SK-N-SH (cell line): ENCODE measurements at regions of chr20 and their contacts with region 1.

Region 1: GRCh38 chr20:46132705-46133120 is 14.6 kb downstream of the CD40 start:
- DNase-seq: peak; percentile 88
- H3K4me3 ChIP-seq: peak overlapping the region in 1 of 2 experiments; percentile 33; a peak in 1 of 4 replicates
- H3K27ac ChIP-seq: no peak overlapping the region
- H3K4me1 ChIP-seq: peaks cover 0 to 35% of the 10 kb centered on the region in 2 experiments; a peak in 1 of 4 replicates
- H3K27me3 ChIP-seq: peaks cover 30% of the 10 kb centered on the region; the same call in 1 of the 2 replicates
- CTCF ChIP-seq: peak; percentile 90
- EP300 ChIP-seq: no peak
- RAD21 ChIP-seq: peak; percentile 94

Region 2: DNA sequence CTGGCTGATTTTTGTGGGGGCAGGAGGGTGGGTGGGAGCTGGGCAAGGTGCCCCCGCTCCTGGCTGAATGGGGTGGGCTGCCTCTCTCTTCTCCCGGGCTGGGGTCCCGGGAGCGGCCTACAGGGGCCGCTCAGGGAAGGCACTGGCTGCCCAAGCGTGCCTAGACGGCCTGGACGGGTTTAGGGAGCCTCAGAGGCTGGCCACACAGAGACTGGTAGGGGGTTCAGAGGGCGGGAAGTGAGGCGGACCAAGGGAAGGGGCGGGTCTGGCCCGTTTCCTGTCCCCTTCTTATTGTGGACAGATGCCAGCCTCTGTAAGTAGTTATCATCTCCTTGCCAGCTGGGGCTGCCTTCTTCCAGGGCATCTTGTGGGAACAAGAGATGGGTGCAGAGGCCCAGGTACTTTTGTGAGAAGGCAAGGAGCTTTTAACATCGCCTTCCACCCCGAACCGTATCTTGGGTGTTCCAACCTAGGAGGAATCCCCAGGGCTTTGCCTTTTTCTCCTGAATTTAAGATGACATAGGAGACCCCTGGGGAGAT is 14.2 kb before region 1 on chr20:
- CTCF ChIA-PET with region 1: interaction called, 24 read pairs
- POLR2A ChIA-PET with region 1: no interaction called
- DNase-seq: no peak
- H3K4me3 ChIP-seq: no peak overlapping the region
- H3K27ac ChIP-seq: no peak overlapping the region
- H3K4me1 ChIP-seq: peaks cover 2 to 11% of the 10 kb centered on the region in 2 experiments; a peak in 2 of 4 replicates
- H3K27me3 ChIP-seq: 0 out of 2 replicates have a peak, but pooled peaks cover 5% of the 10 kb centered on the region
- CTCF ChIP-seq: no peak
- EP300 ChIP-seq: no peak
- RAD21 ChIP-seq: no peak

Region 3: GRCh38 chr20:46174469-46175128 is 41.9 kb after region 1 on chr20:
- CTCF ChIA-PET with region 1: interaction called, 347 read pairs
- POLR2A ChIA-PET with region 1: interaction called, 4 read pairs
- DNase-seq: peak; percentile 95
- H3K4me3 ChIP-seq: no peak overlapping the region; a peak in 1 of 4 replicates
- H3K27ac ChIP-seq: no peak overlapping the region
- H3K4me1 ChIP-seq: peaks cover 0 to 21% of the 10 kb centered on the region in 2 experiments; a peak in 2 of 4 replicates
- H3K27me3 ChIP-seq: peaks cover 21% of the 10 kb centered on the region
- CTCF ChIP-seq: peak; percentile 44
- EP300 ChIP-seq: no peak
- RAD21 ChIP-seq: peak; percentile 72

Region 4: GRCh38 chr20:46286382-46286781 is 153.7 kb after region 1 on chr20:
- CTCF ChIA-PET with region 1: interaction called, 12 read pairs
- POLR2A ChIA-PET with region 1: no interaction called
- DNase-seq: no peak
- H3K4me3 ChIP-seq: no peak overlapping the region
- H3K27ac ChIP-seq: no peak overlapping the region
- H3K4me1 ChIP-seq: no peaks in the 10 kb centered on the region; a peak in 1 of 4 replicates
- H3K27me3 ChIP-seq: no peaks in the 10 kb centered on the region
- CTCF ChIP-seq: no peak
- EP300 ChIP-seq: no peak
- RAD21 ChIP-seq: no peak

Region 5: GRCh38 chr20:46330072-46330763 is 197.5 kb after region 1 on chr20:
- CTCF ChIA-PET with region 1: interaction called, 31 read pairs
- POLR2A ChIA-PET with region 1: no interaction called
- DNase-seq: peak; percentile 55
- H3K4me3 ChIP-seq: no peak overlapping the region
- H3K27ac ChIP-seq: peak overlapping the region in 1 of 2 experiments; percentile 43; a peak in 2 of 4 replicates
- H3K4me1 ChIP-seq: peaks cover 0 to 67% of the 10 kb centered on the region in 2 experiments; a peak in 2 of 4 replicates
- H3K27me3 ChIP-seq: 0 out of 2 replicates have a peak, but pooled peaks cover 8% of the 10 kb centered on the region
- CTCF ChIP-seq: no peak
- EP300 ChIP-seq: peak in 1 of 2 experiments; percentile 36; a peak in 1 of 4 replicates
- RAD21 ChIP-seq: no peak

Region 6: DNA sequence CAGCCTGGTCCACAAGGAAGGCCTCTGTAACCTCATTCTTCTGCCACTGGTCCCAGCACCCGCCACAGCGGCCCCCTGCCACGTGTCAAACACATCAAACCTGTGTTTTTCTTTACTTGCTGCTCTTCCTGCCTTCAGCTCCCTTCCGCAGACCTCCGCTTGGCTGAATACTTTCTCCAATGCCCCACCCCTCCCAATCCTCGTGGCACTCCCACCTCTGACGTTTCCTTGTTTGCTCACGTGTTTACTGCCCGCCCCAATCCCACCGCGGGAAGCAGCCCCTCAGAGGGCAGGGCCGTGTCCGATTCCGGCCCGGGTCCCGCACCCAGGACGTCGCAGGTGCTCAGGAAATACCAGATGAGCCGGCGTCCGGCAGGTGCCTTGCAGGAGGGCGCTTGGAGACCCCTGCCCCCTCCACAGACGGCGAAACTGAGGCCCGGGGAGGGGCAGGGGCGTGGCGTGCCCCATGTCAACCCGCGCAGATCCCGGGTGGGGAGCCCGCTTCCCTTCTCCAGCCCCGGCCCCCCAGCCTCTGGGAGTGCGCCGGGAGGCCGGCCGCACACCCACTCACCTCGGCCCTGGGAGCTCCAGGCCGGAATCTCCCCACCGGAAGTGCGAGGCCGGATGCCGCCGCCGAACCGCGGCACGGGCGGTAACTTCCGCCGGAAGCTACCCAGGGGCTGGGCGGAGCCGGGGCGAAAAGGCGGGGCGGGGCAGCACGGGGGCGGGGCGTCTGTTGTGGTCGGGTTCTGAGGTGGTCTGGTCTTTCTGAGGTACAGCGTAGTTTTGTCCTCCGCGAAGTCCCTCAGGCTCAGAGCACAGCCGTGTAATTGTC is 231.3 kb after region 1 on chr20:
- CTCF ChIA-PET with region 1: interaction called, 32 read pairs
- POLR2A ChIA-PET with region 1: no interaction called
- DNase-seq: peak; percentile 97
- H3K4me3 ChIP-seq: peak overlapping the region; percentile 77 to 84
- H3K27ac ChIP-seq: peak overlapping the region; percentile 92 to 96
- H3K4me1 ChIP-seq: peaks cover 0 to 33% of the 10 kb centered on the region in 2 experiments; a peak in 2 of 4 replicates
- H3K27me3 ChIP-seq: no peaks in the 10 kb centered on the region
- CTCF ChIP-seq: no peak
- EP300 ChIP-seq: no peak
- RAD21 ChIP-seq: no peak

Region 7: GRCh38 chr20:46438156-46438750 is 305.5 kb after region 1 on chr20:
- CTCF ChIA-PET with region 1: interaction called, 25 read pairs
- POLR2A ChIA-PET with region 1: no interaction called
- DNase-seq: peak; percentile 65
- H3K4me3 ChIP-seq: no peak overlapping the region
- H3K27ac ChIP-seq: no peak overlapping the region
- H3K4me1 ChIP-seq: peaks cover 0 to 10% of the 10 kb centered on the region in 2 experiments; a peak in 1 of 4 replicates
- H3K27me3 ChIP-seq: no peaks in the 10 kb centered on the region
- CTCF ChIP-seq: peak; percentile 45
- EP300 ChIP-seq: no peak
- RAD21 ChIP-seq: peak; percentile 84

Region 8: GRCh38 chr20:46784436-46785127 is 651.9 kb after region 1 on chr20:
- CTCF ChIA-PET with region 1: no interaction called
- POLR2A ChIA-PET with region 1: no interaction called
- DNase-seq: no peak
- H3K4me3 ChIP-seq: no peak overlapping the region
- H3K27ac ChIP-seq: no peak overlapping the region
- H3K4me1 ChIP-seq: no peaks in the 10 kb centered on the region; a peak in 1 of 4 replicates
- H3K27me3 ChIP-seq: no peaks in the 10 kb centered on the region
- CTCF ChIP-seq: no peak
- EP300 ChIP-seq: no peak
- RAD21 ChIP-seq: no peak

Region 9: GRCh38 chr20:47360297-47361056 is 1227.8 kb after region 1 on chr20:
- CTCF ChIA-PET with region 1: no interaction called
- POLR2A ChIA-PET with region 1: no interaction called
- DNase-seq: peak; percentile 75
- H3K4me3 ChIP-seq: peak overlapping the region; percentile 3 to 8; a peak in 1 of 4 replicates
- H3K27ac ChIP-seq: peak overlapping the region; percentile 97 to 100
- H3K4me1 ChIP-seq: peaks cover 47 to 58% of the 10 kb centered on the region in 2 experiments
- H3K27me3 ChIP-seq: no peaks in the 10 kb centered on the region
- CTCF ChIP-seq: no peak
- EP300 ChIP-seq: peak in 1 of 2 experiments; percentile 79; a peak in 2 of 4 replicates
- RAD21 ChIP-seq: no peak